ENCODE measurements at regions of chr9 and their contacts with region 1.

Region 1: GRCh38 chr9:81689343-81690190 is at the start of gene TLE1:
- DNase-seq: peak; percentile 98
- ATAC-seq: peak; percentile 76
- H3K4me3 ChIP-seq: peak within 1 kb of the TSS; percentile 87 to 93 (median 92)
- H3K27ac ChIP-seq: peak within 1 kb of the TSS; percentile 91
- H3K4me1 ChIP-seq: peaks cover 36% of the 10 kb centered on the region
- H3K27me3 ChIP-seq: peaks cover 0 to 8% of the 10 kb centered on the region in 2 experiments; a peak in 2 of 5 replicates
- CTCF ChIP-seq: no peak; the same call in 1 of the 2 replicates
- EP300 ChIP-seq: peak in 1 of 2 experiments; percentile 44; a peak in 2 of 4 replicates
- POLR2A ChIP-seq: peak; percentile 42 to 82; a peak in 3 of 4 replicates
- RAD21 ChIP-seq: peak; percentile 59
- total RNA-seq, gene TLE1: 30.7 and 35.9 TPM in 2 replicates

Region 2: GRCh38 chr9:81237565-81238231 is 451.9 kb before region 1 on chr9:
- CTCF ChIA-PET with region 1: no interaction called
- POLR2A ChIA-PET with region 1: no interaction called
- in situ Hi-C with region 1: no loop called
- intact Hi-C with region 1: loop called (anchors 1 kb)
- DNase-seq: peak; percentile 94
- ATAC-seq: peak; percentile 99
- H3K4me3 ChIP-seq: 0 out of 6 replicates have a peak overlapping the region, but pooled peaks of 1 of the 3 experiments have one; percentile 30
- H3K27ac ChIP-seq: peak overlapping the region; percentile 70
- H3K4me1 ChIP-seq: peaks cover 46% of the 10 kb centered on the region
- H3K27me3 ChIP-seq: no peaks in the 10 kb centered on the region
- CTCF ChIP-seq: no peak
- EP300 ChIP-seq: peak; percentile 61 to 83; a peak in 2 of 4 replicates
- POLR2A ChIP-seq: no peak
- RAD21 ChIP-seq: no peak

Region 3: DNA sequence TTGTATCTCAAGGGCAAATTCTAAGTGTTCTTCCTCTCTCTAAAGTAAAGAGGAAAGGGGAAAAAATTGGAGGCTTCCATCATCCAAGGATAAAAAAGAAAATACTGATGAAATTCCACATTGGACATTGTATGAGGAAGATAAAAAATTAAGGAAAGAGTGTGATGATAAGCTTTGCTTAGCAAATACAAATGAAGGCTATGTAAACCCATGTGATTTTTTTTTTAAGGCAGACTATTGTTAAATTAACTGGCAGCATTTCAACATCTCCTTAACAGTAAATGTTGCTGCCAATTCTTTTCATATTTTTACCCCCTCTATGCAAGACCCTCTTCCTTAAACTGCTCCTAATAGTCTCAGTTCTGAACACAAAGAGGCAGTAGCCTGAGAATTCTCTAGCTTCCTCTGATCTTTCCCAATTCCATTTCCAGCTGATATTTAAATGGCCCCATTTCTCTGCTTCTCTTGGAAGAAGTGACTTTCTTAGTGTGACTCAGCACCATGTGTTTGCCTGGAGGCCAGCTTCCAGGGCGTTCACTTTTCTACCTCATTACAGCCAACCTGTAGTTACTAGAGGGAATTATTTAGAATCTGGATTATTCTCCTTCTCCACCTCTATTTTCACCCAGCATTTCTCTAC is 159.9 kb before region 1 on chr9:
- CTCF ChIA-PET with region 1: no interaction called
- POLR2A ChIA-PET with region 1: interaction called, 3 read pairs
- in situ Hi-C with region 1: loop called (anchors 10 kb)
- intact Hi-C with region 1: no loop called
- DNase-seq: peak; percentile 25
- ATAC-seq: no peak; the same call in 2 of the 3 replicates
- H3K4me3 ChIP-seq: no peak overlapping the region
- H3K27ac ChIP-seq: no peak overlapping the region
- H3K4me1 ChIP-seq: peaks cover 39% of the 10 kb centered on the region
- H3K27me3 ChIP-seq: no peaks in the 10 kb centered on the region
- CTCF ChIP-seq: no peak
- EP300 ChIP-seq: 0 out of 4 replicates have a peak, but pooled peaks of 1 of the 2 experiments have one; percentile 5
- POLR2A ChIP-seq: no peak
- RAD21 ChIP-seq: no peak

Region 4: DNA sequence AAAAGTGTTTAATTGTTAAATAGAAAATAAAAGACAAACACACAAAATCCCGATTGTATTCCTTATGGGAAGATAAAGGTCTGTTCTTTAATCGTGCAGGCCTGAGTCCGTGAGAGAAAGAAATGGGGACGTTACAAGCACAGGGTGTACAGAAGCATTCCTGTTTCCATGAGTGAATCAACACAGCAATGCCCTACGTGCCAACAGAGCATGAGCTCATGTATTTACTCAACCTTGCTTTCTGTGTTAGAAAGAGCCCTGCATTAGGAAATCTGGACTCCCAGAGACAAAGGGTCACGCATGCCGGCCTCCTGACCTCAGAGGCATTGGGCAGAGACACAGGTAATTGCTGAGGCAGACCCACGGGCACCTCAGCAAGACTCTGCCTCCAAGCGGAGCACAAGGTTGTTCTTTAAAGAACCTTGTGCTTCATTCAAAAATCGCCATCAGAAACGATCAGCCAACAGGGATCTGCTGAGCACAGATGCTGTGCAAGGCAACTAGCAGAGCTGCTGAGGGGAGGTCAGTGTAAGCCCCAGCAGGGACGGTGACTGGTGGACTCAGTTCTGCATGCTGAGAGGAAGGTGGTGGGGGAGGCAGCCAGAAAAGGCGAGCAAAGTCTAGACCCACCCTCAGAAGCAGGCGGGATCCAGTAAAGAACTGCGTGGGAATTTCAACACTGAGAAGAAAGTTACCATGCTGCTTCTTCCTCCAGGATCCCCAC is 101.3 kb before region 1 on chr9:
- CTCF ChIA-PET with region 1: interaction called, 4 read pairs
- POLR2A ChIA-PET with region 1: interaction called, 37 read pairs
- in situ Hi-C with region 1: no loop called
- intact Hi-C with region 1: loop called (anchors 1 kb)
- DNase-seq: peak; percentile 99
- ATAC-seq: peak; percentile 96
- H3K4me3 ChIP-seq: peak overlapping the region in 2 of 3 experiments; percentile 11 to 47; a peak in 3 of 6 replicates
- H3K27ac ChIP-seq: peak overlapping the region; percentile 99
- H3K4me1 ChIP-seq: peaks cover 96% of the 10 kb centered on the region
- H3K27me3 ChIP-seq: no peaks in the 10 kb centered on the region
- CTCF ChIP-seq: peak; percentile 52
- EP300 ChIP-seq: peak; percentile 97 to 98
- POLR2A ChIP-seq: peak; percentile 40 to 47; a peak in 1 of 4 replicates
- RAD21 ChIP-seq: peak; percentile 66; the same call in 1 of the 2 replicates

Region 5: DNA sequence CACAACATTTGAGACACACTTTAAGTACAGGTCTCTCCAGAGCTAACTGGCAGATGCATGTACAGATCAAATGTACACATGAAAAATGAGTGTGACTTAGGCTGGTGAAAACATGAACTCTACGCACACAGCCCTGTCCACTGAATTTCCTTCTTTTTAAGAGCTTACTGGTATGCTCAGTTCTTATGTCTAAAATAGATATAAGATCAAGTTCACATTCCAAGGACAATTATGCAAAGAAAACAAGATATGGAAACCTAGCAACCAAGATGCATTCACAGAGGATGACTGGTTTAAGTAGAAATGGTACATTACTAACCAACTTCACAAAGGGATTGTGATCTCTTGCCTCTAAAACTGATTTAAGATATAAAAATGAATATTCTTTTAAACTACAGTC is 57.0 kb before region 1 on chr9:
- CTCF ChIA-PET with region 1: interaction called, 3 read pairs
- POLR2A ChIA-PET with region 1: interaction called, 11 read pairs
- in situ Hi-C with region 1: no loop called
- intact Hi-C with region 1: loop called (anchors 1 kb)
- DNase-seq: no peak
- ATAC-seq: no peak
- H3K4me3 ChIP-seq: no peak overlapping the region
- H3K27ac ChIP-seq: no peak overlapping the region
- H3K4me1 ChIP-seq: peaks cover 91% of the 10 kb centered on the region
- H3K27me3 ChIP-seq: no peaks in the 10 kb centered on the region
- CTCF ChIP-seq: no peak
- EP300 ChIP-seq: no peak
- POLR2A ChIP-seq: no peak
- RAD21 ChIP-seq: no peak

Region 6: DNA sequence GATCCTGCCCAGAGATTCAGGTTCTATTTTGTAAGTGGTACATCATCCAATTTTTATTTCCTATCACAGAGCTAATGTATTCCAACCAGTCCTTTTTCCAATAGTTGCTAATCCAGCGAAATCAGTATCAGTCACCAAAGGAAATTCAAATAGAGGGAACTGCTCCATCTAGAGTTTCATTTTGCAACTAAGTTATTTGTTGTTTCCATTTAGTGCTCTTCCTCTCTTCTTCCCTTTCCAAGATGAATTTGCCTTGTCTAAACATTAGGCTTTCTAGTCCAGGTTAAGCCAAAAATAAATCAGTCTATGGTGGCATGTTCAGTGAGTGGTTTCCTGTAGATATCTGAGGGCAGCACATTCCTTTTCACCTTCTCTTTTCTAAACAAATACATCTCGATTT is 158.9 kb after region 1 on chr9:
- CTCF ChIA-PET with region 1: no interaction called
- POLR2A ChIA-PET with region 1: no interaction called
- in situ Hi-C with region 1: no loop called
- intact Hi-C with region 1: loop called (anchors 5 kb)
- DNase-seq: peak; percentile 7
- ATAC-seq: 0 out of 3 replicates have a peak, but pooled peaks have one; percentile 26
- H3K4me3 ChIP-seq: no peak overlapping the region
- H3K27ac ChIP-seq: no peak overlapping the region
- H3K4me1 ChIP-seq: peaks cover 30% of the 10 kb centered on the region
- H3K27me3 ChIP-seq: no peaks in the 10 kb centered on the region
- CTCF ChIP-seq: peak; percentile 47
- EP300 ChIP-seq: no peak
- POLR2A ChIP-seq: no peak
- RAD21 ChIP-seq: no peak

Region 7: GRCh38 chr9:82961504-82962125 is 1272.0 kb after region 1 on chr9:
- CTCF ChIA-PET with region 1: no interaction called
- POLR2A ChIA-PET with region 1: no interaction called
- in situ Hi-C with region 1: no loop called
- intact Hi-C with region 1: loop called (anchors 2 kb)
- DNase-seq: peak; percentile 73
- ATAC-seq: peak; percentile 97
- H3K4me3 ChIP-seq: no peak overlapping the region
- H3K27ac ChIP-seq: no peak overlapping the region
- H3K4me1 ChIP-seq: no peaks in the 10 kb centered on the region
- H3K27me3 ChIP-seq: no peaks in the 10 kb centered on the region
- CTCF ChIP-seq: peak; percentile 91
- EP300 ChIP-seq: no peak
- POLR2A ChIP-seq: no peak
- RAD21 ChIP-seq: peak; percentile 69; the same call in 1 of the 2 replicates

Measured in HepG2 (cell line).